SK-N-SH (cell line): ENCODE measurements at regions of chr9 and their contacts with region 1.

Region 1: DNA sequence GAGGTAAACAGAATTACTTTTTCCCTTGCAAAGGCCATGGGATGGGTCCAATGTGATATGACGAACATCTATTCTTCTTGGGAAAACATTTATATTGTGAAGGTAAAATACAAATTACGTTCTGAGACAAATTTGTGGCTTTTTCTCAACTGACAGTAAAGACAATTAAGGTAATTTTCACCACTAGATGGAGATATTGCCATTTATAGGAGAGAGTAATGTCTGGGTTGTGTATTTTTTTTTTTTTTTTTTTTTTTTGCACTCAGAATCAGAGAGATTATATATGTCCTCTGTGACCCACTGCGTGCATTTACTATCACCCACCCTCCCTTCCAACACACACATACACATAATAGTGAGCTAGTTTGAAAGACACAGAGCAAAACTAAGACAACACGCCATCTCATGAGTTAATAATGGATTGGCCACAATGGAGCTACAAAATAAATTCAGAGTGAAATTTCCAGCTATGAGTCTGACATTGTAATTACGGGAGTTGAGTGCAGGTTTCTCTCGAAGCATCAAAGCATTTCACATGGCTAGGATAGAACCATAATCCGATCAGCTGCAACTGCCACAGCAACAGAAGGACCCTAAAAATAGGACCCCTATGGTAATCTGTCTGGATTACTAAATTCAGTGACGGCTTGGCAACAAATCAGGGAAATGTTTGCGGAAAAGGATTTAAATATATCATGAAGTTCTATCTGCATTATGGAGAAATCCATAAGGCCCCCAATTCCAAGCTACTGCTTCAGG is 49.2 kb downstream of the ANXA1 start:
- DNase-seq: peak; percentile 10
- H3K4me3 ChIP-seq: no peak overlapping the region; a peak in 1 of 4 replicates
- H3K27ac ChIP-seq: no peak overlapping the region
- H3K4me1 ChIP-seq: no peaks in the 10 kb centered on the region; a peak in 1 of 4 replicates
- H3K27me3 ChIP-seq: no peaks in the 10 kb centered on the region; the same call in 1 of the 2 replicates
- CTCF ChIP-seq: peak; percentile 74
- EP300 ChIP-seq: no peak
- RAD21 ChIP-seq: peak; percentile 77

Region 2: DNA sequence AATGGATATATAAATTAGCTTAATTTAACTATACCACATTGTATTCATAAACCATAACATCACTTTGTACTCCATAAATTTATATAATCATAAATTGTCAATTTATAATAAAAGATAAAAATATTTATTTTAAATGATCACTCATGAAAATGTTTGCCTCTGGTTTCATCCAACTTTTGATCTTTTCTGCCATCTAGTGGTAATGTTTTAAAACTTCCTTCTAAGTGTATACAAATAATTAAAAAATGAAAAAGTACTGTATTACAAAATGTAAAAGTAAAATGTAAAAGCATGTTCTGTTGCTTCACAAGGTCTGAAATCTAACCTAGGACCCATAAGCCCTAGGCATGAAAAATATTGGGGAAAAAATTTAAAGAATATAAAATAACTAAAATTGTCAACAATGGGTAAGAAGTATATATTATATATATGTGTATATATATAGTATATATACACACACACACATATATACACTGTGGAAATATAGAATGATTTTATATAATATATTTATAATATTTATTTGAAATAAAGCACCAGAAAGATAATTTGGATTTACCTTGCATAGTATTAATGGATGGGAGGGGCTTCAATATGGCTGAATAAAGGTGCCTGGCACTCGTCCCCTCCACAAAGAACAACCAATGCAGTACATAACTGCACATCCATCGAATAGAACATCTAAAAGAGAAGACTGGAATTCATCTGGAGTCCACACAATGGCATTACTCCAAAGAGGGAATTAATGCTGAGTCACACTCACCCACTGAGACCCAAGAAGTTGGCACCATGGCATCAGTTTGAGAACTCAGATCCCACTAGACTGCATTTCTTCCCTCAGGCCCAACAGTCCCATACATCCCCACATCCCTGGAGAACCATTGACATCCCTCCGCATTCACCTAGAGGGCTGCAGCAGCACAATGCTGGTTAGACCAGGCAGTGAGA is 16.7 kb before region 1 on chr9:
- CTCF ChIA-PET with region 1: interaction called, 11 read pairs
- POLR2A ChIA-PET with region 1: no interaction called
- DNase-seq: no peak
- H3K4me3 ChIP-seq: no peak overlapping the region; a peak in 1 of 4 replicates
- H3K27ac ChIP-seq: no peak overlapping the region
- H3K4me1 ChIP-seq: peaks cover 0 to 29% of the 10 kb centered on the region in 2 experiments; a peak in 2 of 4 replicates
- H3K27me3 ChIP-seq: no peaks in the 10 kb centered on the region
- CTCF ChIP-seq: peak; percentile 63
- EP300 ChIP-seq: no peak
- RAD21 ChIP-seq: peak; percentile 67

Region 3: DNA sequence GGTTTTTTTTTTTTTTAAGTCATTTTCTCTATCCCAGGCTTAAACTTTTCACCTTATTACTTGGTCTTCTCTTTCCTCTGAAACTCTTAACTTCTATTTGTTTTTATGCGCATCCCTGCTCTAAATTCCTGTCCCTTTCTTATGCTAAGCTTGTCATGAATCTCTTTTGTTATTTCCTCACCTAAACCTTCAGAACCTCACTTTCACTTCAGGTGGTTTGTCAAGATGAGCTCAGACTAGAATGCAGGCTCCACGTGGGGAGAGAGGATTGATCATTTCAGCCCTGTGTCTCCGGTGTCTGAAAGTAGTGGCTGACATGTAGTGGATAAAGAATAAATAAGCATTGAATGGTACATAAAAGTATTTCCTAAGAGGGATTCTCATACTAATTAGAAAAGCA is 14.4 kb after region 1 on chr9:
- CTCF ChIA-PET with region 1: interaction called, 13 read pairs
- POLR2A ChIA-PET with region 1: no interaction called
- DNase-seq: no peak
- H3K4me3 ChIP-seq: no peak overlapping the region
- H3K27ac ChIP-seq: no peak overlapping the region
- H3K4me1 ChIP-seq: no peaks in the 10 kb centered on the region
- H3K27me3 ChIP-seq: peaks cover 6% of the 10 kb centered on the region; the same call in 1 of the 2 replicates
- CTCF ChIP-seq: no peak
- EP300 ChIP-seq: no peak
- RAD21 ChIP-seq: no peak

Region 4: GRCh38 chr9:74643303-74643923 is 1442.5 kb after region 1 on chr9:
- CTCF ChIA-PET with region 1: interaction called, 16 read pairs
- POLR2A ChIA-PET with region 1: no interaction called
- DNase-seq: no peak
- H3K4me3 ChIP-seq: no peak overlapping the region
- H3K27ac ChIP-seq: no peak overlapping the region
- H3K4me1 ChIP-seq: no peaks in the 10 kb centered on the region; a peak in 1 of 4 replicates
- H3K27me3 ChIP-seq: no peaks in the 10 kb centered on the region
- CTCF ChIP-seq: no peak
- EP300 ChIP-seq: no peak
- RAD21 ChIP-seq: no peak

Region 5: DNA sequence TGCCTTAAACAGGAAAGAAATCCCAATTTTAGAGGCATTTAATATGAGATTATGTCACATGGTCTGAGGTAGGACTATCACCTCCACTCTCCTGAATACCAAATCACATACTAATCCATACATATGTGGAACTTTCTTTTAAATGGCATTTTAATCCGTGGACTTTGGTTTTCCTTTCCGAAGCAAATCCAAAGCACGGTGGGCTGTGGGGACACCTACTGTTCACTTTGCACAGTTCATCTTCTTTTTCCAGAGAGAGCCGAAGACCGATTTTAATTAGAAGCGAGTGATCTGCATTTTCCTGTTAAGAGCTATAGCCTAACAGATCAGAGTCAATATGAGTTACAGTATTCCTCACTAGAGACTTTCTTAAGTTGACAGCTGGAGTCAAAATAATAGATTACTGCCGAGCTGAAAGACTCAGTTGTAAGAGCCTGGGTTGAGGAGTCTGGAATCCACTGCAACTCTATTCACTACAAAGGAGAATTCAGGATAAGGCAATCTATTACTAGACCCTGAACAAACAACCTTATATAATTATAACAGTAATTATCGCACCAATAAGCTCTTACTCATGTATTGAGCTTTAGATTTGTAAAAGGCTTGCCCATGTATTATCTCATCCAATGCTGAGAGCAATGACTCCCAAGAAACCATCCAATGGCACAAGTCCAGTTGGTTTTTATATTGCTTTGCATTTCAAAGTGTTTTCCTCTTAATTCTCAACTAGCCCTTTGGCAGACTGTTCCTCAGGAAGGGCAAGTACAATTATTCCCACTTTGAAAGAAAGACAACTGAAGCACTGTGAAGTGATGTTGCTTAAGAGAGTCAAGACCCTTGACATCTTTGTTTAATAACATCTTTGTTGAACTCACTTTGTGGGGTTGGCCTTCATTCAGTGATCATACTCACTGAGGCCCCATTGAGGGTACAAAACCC is 1542.2 kb after region 1 on chr9:
- CTCF ChIA-PET with region 1: interaction called, 28 read pairs
- POLR2A ChIA-PET with region 1: no interaction called
- DNase-seq: peak; percentile 39
- H3K4me3 ChIP-seq: peak overlapping the region in 1 of 2 experiments; percentile 44; a peak in 1 of 4 replicates
- H3K27ac ChIP-seq: no peak overlapping the region
- H3K4me1 ChIP-seq: no peaks in the 10 kb centered on the region
- H3K27me3 ChIP-seq: no peaks in the 10 kb centered on the region; the same call in 1 of the 2 replicates
- CTCF ChIP-seq: peak; percentile 74
- EP300 ChIP-seq: no peak
- RAD21 ChIP-seq: peak; percentile 87